Mammary epithelial cell (primary cell): ENCODE measurements at regions of chr1 and their contacts with region 1.

Region 1: GRCh38 chr1:218171285-218171893 is 113.7 kb upstream of the RRP15 start:
- DNase-seq: peak; percentile 16
- H3K4me3 ChIP-seq: no peak overlapping the region
- H3K27ac ChIP-seq: no peak overlapping the region
- H3K4me1 ChIP-seq: no peaks in the 10 kb centered on the region
- H3K27me3 ChIP-seq: peaks cover 13% of the 10 kb centered on the region
- CTCF ChIP-seq: peak; percentile 74 to 78

Region 2: DNA sequence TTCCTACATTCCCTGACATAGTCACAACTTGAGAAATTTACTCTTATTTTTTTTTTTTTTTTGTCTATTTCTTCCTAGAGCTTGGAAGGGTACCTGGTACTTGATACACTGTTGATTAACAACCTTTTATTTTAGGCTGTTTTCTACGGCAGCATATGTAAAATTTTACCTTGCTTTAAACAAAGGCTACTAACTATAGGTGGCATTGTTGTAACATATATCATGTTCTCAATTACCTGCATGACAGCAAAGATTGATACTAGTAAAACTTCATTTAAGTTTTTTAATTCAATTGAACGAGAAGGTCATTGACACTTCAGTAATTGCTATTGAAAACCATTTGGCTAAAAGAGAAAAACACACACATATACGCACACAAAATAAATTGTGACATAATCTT is 1209.9 kb before region 1 on chr1:
- CTCF ChIA-PET with region 1: no interaction called
- dilution Hi-C with region 1: no loop called
- in situ Hi-C with region 1: no loop called
- intact Hi-C with region 1: loop called (anchors 10 kb)
- DNase-seq: no peak
- H3K4me3 ChIP-seq: no peak overlapping the region
- H3K27ac ChIP-seq: no peak overlapping the region
- H3K4me1 ChIP-seq: no peaks in the 10 kb centered on the region
- H3K27me3 ChIP-seq: no peaks in the 10 kb centered on the region
- CTCF ChIP-seq: peak in 1 of 2 donors; percentile 24

Region 3: GRCh38 chr1:217747156-217747769 is 424.1 kb before region 1 on chr1:
- CTCF ChIA-PET with region 1: no interaction called
- dilution Hi-C with region 1: no loop called
- in situ Hi-C with region 1: no loop called
- intact Hi-C with region 1: loop called (anchors 5 kb)
- DNase-seq: peak; percentile 14
- H3K4me3 ChIP-seq: no peak overlapping the region
- H3K27ac ChIP-seq: no peak overlapping the region
- H3K4me1 ChIP-seq: no peaks in the 10 kb centered on the region
- H3K27me3 ChIP-seq: no peaks in the 10 kb centered on the region
- CTCF ChIP-seq: peak; percentile 72 to 75

Region 4: DNA sequence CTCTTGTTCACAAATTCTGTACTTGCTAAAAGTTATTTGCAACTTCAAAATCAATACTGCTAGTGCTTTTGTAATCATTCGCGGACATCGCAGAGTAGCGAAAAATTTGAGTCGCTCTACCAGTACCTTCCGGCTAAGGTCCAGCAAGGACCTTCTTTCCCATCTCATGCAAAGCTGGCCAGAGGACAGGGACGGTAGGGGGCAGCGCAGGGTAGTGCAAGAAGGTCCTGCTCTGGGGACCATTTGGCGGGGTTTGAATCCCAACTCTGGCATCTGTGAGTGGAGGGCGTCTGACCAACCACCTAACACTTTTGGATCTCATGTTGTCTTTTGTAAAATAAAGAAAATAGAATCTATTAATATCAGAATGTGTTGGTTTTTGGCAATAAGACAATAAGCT is 282.0 kb before region 1 on chr1:
- CTCF ChIA-PET with region 1: no interaction called
- dilution Hi-C with region 1: no loop called
- in situ Hi-C with region 1: no loop called
- intact Hi-C with region 1: loop called (anchors 1 kb)
- DNase-seq: no peak
- H3K4me3 ChIP-seq: no peak overlapping the region
- H3K27ac ChIP-seq: no peak overlapping the region
- H3K4me1 ChIP-seq: peaks cover 5% of the 10 kb centered on the region
- H3K27me3 ChIP-seq: peaks cover 3% of the 10 kb centered on the region
- CTCF ChIP-seq: peak in 1 of 2 donors; percentile 41

Region 5: DNA sequence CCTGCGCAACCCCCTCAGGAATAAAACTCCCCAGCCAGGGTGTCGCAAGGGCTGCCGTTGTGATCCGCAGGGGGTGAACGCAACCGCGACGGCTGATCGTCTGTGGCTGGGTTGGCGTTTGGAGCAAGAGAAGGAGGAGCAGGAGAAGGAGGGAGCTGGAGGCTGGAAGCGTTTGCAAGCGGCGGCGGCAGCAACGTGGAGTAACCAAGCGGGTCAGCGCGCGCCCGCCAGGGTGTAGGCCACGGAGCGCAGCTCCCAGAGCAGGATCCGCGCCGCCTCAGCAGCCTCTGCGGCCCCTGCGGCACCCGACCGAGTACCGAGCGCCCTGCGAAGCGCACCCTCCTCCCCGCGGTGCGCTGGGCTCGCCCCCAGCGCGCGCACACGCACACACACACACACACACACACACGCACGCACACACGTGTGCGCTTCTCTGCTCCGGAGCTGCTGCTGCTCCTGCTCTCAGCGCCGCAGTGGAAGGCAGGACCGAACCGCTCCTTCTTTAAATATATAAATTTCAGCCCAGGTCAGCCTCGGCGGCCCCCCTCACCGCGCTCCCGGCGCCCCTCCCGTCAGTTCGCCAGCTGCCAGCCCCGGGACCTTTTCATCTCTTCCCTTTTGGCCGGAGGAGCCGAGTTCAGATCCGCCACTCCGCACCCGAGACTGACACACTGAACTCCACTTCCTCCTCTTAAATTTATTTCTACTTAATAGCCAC is 174.4 kb after region 1 on chr1:
- CTCF ChIA-PET with region 1: no interaction called
- dilution Hi-C with region 1: no loop called
- in situ Hi-C with region 1: no loop called
- intact Hi-C with region 1: no loop called
- DNase-seq: peak; percentile 75
- H3K4me3 ChIP-seq: peak overlapping the region; percentile 77 to 92 (median 81)
- H3K27ac ChIP-seq: peak overlapping the region; percentile 88
- H3K4me1 ChIP-seq: peaks cover 7% of the 10 kb centered on the region
- H3K27me3 ChIP-seq: no peaks in the 10 kb centered on the region
- CTCF ChIP-seq: peak in 1 of 2 donors; percentile 1